ENCODE measurements at regions of chr7 and their contacts with region 1.

Region 1: GRCh38 chr7:79528421-79528820 is 75.0 kb upstream of the MAGI2 start:
- DNase-seq: peak; percentile 44
- ATAC-seq: peak; percentile 77
- H3K4me3 ChIP-seq: no peak overlapping the region
- H3K27ac ChIP-seq: no peak overlapping the region
- H3K4me1 ChIP-seq: peaks cover 3 to 30% of the 10 kb centered on the region in 2 experiments; a peak in 3 of 4 replicates
- H3K27me3 ChIP-seq: no peaks in the 10 kb centered on the region
- CTCF ChIP-seq: no peak
- POLR2A ChIP-seq: no peak
- RAD21 ChIP-seq: no peak

Region 2: DNA sequence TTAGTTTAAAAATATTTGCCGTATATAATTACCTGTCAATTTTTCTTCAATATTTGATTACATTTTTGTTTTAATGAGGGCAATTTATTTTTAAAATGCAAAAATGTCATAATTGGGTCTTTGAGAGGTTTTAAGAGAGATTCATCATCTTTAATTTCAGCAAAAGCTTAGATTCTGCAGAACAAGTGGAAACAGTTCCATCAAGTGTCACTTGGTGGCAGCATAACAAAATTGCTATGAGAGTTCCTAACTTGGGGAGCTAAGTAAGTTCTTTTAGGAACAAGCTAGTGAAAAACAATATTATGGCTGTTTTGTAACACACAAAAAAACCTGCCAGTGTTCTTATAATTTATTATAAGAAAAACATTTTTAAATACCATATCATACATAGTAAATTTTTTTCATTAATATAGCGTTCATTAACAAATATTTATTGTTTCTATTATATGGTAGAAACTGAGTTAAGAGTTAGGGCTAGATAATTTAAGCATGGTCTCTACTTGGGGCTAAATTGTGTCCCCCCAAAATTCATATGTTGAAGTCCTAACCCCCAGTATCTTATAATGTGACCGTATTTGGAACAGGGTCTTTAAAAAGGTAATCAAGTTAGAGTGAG is 230.2 kb before region 1 on chr7:
- CTCF ChIA-PET with region 1: no interaction called
- POLR2A ChIA-PET with region 1: no interaction called
- RAD21 ChIA-PET with region 1: no interaction called
- intact Hi-C with region 1: no loop called
- DNase-seq: peak; percentile 28
- ATAC-seq: 0 out of 2 replicates have a peak, but pooled peaks have one; percentile 54
- H3K4me3 ChIP-seq: no peak overlapping the region
- H3K27ac ChIP-seq: no peak overlapping the region
- H3K4me1 ChIP-seq: no peaks in the 10 kb centered on the region
- H3K27me3 ChIP-seq: no peaks in the 10 kb centered on the region
- CTCF ChIP-seq: peak; percentile 56 to 70 (median 68); a peak in 5 of 6 replicates
- POLR2A ChIP-seq: no peak
- RAD21 ChIP-seq: peak; percentile 66

Region 3: DNA sequence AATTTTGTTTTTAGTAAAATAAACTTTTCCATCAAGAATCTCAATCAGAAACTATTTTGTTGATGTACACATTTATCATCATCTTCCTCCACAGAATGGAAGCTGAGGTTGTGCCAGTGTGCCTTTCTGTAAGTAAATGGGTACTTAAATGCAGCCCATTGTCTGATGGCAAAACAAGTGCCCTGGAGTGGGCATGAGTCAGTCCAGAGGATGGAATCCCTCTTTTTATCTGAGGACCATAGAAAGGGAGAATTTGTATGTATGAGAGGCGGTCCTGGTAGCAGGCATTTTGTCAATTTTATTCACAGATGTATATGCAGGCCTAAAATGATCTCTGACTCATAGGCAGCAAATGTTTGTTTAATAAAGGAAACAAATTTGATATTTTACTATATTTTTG is 27.1 kb after region 1 on chr7:
- CTCF ChIA-PET with region 1: no interaction called
- POLR2A ChIA-PET with region 1: no interaction called
- RAD21 ChIA-PET with region 1: no interaction called
- intact Hi-C with region 1: loop called (anchors 1 kb)
- DNase-seq: no peak
- ATAC-seq: no peak
- H3K4me3 ChIP-seq: no peak overlapping the region
- H3K27ac ChIP-seq: no peak overlapping the region
- H3K4me1 ChIP-seq: no peaks in the 10 kb centered on the region
- H3K27me3 ChIP-seq: no peaks in the 10 kb centered on the region
- CTCF ChIP-seq: no peak
- POLR2A ChIP-seq: no peak
- RAD21 ChIP-seq: no peak